Right ventricle myocardium superior (tissue), 1 donor: ENCODE measurements at regions of chr1 and their contacts with region 1.

Region 1: DNA sequence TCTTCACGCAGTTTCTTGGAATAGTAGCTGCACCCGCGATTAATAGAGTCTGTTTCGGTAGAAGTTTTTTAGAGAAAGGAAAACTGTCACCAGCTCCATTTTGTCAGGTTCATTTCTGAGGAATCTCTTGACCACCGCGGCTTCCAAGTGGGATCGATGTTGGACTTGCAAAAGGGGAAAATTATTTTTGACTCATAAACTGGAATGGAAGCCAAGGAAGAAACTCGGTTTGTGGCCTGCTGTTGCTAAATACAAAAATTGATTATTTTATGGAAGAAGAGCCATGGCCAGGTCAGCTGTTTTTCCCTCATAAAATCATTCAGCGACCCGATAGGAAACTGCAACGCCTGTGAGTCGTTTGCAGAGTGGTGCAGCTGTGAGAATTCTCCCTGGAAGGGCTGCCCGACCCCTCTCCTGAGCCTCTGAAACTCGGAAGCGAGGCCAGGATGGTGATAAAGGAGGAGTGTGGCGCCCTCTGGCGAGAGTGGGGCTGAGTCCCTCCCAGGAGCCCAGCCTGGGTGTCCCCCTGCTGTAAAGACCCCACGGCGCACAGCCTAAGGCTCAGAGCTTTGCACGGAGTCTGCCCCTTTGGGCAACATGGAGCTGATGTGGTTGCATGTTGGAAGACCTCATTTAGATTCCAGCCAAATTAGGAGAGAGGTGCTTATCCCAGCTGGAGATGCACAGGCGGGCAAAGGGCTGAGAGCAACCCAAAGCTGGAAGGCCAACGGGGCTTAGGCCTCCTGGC is 83.6 kb upstream of the SLC25A33 start:
- DNase-seq: peak; percentile 83
- ATAC-seq: peak; percentile 86

Region 2: GRCh38 chr1:9269078-9269501 is 186.6 kb before region 1 on chr1:
- intact Hi-C with region 1: loop called (anchors 5 kb)
- DNase-seq: peak; percentile 39
- ATAC-seq: peak; percentile 11

Region 3: GRCh38 chr1:9529190-9529589 is 73.5 kb after region 1 on chr1:
- intact Hi-C with region 1: no loop called
- DNase-seq: no peak
- ATAC-seq: no peak